ENCODE measurements at regions of chr6 and their contacts with region 1.

Region 1: GRCh38 chr6:129598244-129599187 is 111.5 kb downstream of the ARHGAP18 start:
- DNase-seq: peak in 4 of 35 experiments; percentile 8 to 83 (median 34)
- ATAC-seq: peak; percentile 73 to 80 (median 78)
- H3K4me3 ChIP-seq: no peak overlapping the region
- H3K4me3 Mint-ChIP-seq: no peak overlapping the region
- H3K27ac ChIP-seq: no peak overlapping the region
- H3K27ac Mint-ChIP-seq: no peak overlapping the region
- H3K4me1 ChIP-seq: no peaks in the 10 kb centered on the region
- H3K4me1 Mint-ChIP-seq: peaks cover 0 to 2% (median 0%) of the 10 kb centered on the region in 3 donors
- H3K27me3 ChIP-seq: no peaks in the 10 kb centered on the region
- H3K27me3 Mint-ChIP-seq: no peaks in the 10 kb centered on the region

Region 2: DNA sequence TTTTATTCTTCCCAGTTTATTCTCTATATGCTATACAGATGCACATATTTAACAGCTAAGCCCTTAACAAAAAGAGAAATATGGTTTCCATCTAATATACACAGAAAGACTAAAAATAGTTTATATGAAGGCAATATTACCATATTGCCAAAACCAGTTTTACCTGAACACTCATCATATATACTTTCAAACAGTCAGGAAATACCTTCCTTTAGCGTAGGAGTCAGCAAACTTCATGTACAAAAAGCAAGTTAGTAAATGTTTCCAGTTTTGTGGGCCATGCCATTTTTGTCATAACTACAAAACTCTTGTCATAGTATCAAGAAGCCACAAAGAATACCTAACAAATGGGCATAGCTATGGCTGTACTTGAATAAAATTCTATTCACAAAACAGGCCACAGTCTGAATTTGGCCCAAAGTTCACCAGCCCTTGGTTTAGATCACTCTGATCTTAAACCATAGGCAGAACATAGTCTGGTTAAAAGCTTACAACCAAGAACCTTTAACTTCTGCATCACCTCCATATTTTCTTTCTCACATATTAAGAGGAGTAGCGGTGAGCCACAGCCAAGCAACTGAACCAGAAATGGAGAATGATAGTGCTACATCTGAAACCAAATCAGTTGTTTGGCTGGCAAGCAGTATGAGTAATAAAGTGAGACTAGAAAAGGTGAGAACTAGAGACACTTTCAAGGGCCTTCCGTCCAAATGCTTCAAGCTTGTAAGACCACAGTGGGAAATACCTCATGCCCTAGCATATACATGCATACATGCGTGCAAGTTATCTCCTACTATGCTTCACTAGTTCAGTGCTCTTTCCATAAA is 1194.7 kb before region 1 on chr6:
- CTCF ChIA-PET with region 1: no interaction called
- POLR2A ChIA-PET with region 1: no interaction called
- DNase-seq: no peak
- ATAC-seq: no peak
- H3K4me3 ChIP-seq: no peak overlapping the region
- H3K4me3 Mint-ChIP-seq: no peak overlapping the region
- H3K27ac ChIP-seq: no peak overlapping the region
- H3K27ac Mint-ChIP-seq: no peak overlapping the region
- H3K4me1 ChIP-seq: no peaks in the 10 kb centered on the region
- H3K4me1 Mint-ChIP-seq: peaks cover 0 to 2% (median 0%) of the 10 kb centered on the region in 3 donors
- H3K27me3 ChIP-seq: no peaks in the 10 kb centered on the region
- H3K27me3 Mint-ChIP-seq: no peaks in the 10 kb centered on the region

Region 3: GRCh38 chr6:129162605-129163004 is 435.9 kb before region 1 on chr6:
- CTCF ChIA-PET with region 1: no interaction called
- POLR2A ChIA-PET with region 1: no interaction called
- DNase-seq: no peak
- ATAC-seq: no peak
- H3K4me3 ChIP-seq: no peak overlapping the region
- H3K4me3 Mint-ChIP-seq: no peak overlapping the region
- H3K27ac ChIP-seq: no peak overlapping the region
- H3K27ac Mint-ChIP-seq: no peak overlapping the region
- H3K4me1 ChIP-seq: no peaks in the 10 kb centered on the region
- H3K4me1 Mint-ChIP-seq: no peaks in the 10 kb centered on the region
- H3K27me3 ChIP-seq: no peaks in the 10 kb centered on the region
- H3K27me3 Mint-ChIP-seq: no peaks in the 10 kb centered on the region

Region 4: GRCh38 chr6:129280749-129281148 is 317.8 kb before region 1 on chr6:
- CTCF ChIA-PET with region 1: no interaction called
- POLR2A ChIA-PET with region 1: no interaction called
- DNase-seq: peak in 34 of 35 experiments; percentile 6 to 73 (median 40)
- ATAC-seq: peak; percentile 81 to 98 (median 92)
- H3K4me3 ChIP-seq: peak overlapping the region in 1 of 2 donors; percentile 4
- H3K4me3 Mint-ChIP-seq: peak overlapping the region; percentile 2 to 54 (median 2)
- H3K27ac ChIP-seq: peak overlapping the region; percentile 76
- H3K27ac Mint-ChIP-seq: peak overlapping the region; percentile 30 to 84
- H3K4me1 ChIP-seq: peaks cover 3 to 12% of the 10 kb centered on the region in 2 experiments
- H3K4me1 Mint-ChIP-seq: peaks cover 8 to 49% (median 35%) of the 10 kb centered on the region in 3 donors
- H3K27me3 ChIP-seq: no peaks in the 10 kb centered on the region
- H3K27me3 Mint-ChIP-seq: peaks cover 0 to 7% of the 10 kb centered on the region in 2 donors

Region 5: GRCh38 chr6:129469070-129469662 is 129.3 kb before region 1 on chr6:
- CTCF ChIA-PET with region 1: interaction called in 1 of 2 experiments, 31 read pairs
- POLR2A ChIA-PET with region 1: no interaction called
- DNase-seq: no peak
- ATAC-seq: no peak
- H3K4me3 ChIP-seq: no peak overlapping the region
- H3K4me3 Mint-ChIP-seq: no peak overlapping the region
- H3K27ac ChIP-seq: no peak overlapping the region
- H3K27ac Mint-ChIP-seq: no peak overlapping the region
- H3K4me1 ChIP-seq: no peaks in the 10 kb centered on the region
- H3K4me1 Mint-ChIP-seq: no peaks in the 10 kb centered on the region
- H3K27me3 ChIP-seq: no peaks in the 10 kb centered on the region
- H3K27me3 Mint-ChIP-seq: peaks cover 0 to 4% of the 10 kb centered on the region in 2 donors

Region 6: DNA sequence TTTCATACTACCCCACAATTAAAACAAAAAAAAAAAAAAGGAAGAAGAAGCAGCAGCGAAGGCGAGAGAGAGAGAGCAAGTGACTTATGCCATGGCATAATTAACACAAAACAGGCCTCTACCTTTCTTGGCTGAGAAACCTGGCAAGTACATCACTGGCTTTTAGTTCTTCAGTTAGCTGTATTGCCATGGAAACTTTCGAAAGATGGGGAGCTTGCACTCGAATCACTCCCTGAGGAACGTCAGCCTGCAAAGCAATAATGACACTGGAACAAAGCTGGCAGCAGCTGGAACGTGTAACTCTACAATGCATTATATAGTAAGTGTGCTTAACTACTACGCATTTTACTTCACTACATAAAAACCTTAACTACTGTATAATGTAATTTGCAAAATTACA is 14.7 kb before region 1 on chr6:
- CTCF ChIA-PET with region 1: no interaction called
- POLR2A ChIA-PET with region 1: no interaction called
- DNase-seq: no peak
- ATAC-seq: no peak
- H3K4me3 ChIP-seq: no peak overlapping the region
- H3K4me3 Mint-ChIP-seq: no peak overlapping the region
- H3K27ac ChIP-seq: no peak overlapping the region
- H3K27ac Mint-ChIP-seq: no peak overlapping the region
- H3K4me1 ChIP-seq: no peaks in the 10 kb centered on the region
- H3K4me1 Mint-ChIP-seq: no peaks in the 10 kb centered on the region
- H3K27me3 ChIP-seq: no peaks in the 10 kb centered on the region
- H3K27me3 Mint-ChIP-seq: no peaks in the 10 kb centered on the region

Region 7: DNA sequence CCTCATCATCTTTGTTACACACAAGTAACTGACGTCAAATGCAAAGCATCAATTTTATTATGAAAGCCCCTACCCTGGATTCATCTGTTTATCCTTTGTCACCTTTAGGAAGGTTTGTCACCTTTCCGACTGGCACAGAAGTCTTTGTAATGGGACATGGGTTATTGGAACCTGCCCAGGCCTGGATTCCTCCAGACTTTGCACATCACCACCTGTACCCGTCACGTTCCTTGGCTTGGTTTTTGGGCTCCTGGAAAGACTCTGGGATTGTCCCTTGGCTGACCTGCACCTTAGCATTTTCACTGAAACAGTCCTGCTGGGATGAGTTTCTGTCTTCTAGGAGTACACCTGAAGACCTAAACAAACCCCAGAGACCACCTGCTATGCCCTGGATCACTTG is 126.8 kb after region 1 on chr6:
- CTCF ChIA-PET with region 1: interaction called, 75 to 147 read pairs
- POLR2A ChIA-PET with region 1: interaction called in 1 of 2 experiments, 4 read pairs
- DNase-seq: no peak
- ATAC-seq: no peak
- H3K4me3 ChIP-seq: no peak overlapping the region
- H3K4me3 Mint-ChIP-seq: no peak overlapping the region
- H3K27ac ChIP-seq: no peak overlapping the region
- H3K27ac Mint-ChIP-seq: no peak overlapping the region
- H3K4me1 ChIP-seq: peaks cover 0 to 1% of the 10 kb centered on the region in 2 experiments
- H3K4me1 Mint-ChIP-seq: peaks cover 0 to 2% (median under 1%) of the 10 kb centered on the region in 3 donors
- H3K27me3 ChIP-seq: no peaks in the 10 kb centered on the region
- H3K27me3 Mint-ChIP-seq: no peaks in the 10 kb centered on the region

Region 8: DNA sequence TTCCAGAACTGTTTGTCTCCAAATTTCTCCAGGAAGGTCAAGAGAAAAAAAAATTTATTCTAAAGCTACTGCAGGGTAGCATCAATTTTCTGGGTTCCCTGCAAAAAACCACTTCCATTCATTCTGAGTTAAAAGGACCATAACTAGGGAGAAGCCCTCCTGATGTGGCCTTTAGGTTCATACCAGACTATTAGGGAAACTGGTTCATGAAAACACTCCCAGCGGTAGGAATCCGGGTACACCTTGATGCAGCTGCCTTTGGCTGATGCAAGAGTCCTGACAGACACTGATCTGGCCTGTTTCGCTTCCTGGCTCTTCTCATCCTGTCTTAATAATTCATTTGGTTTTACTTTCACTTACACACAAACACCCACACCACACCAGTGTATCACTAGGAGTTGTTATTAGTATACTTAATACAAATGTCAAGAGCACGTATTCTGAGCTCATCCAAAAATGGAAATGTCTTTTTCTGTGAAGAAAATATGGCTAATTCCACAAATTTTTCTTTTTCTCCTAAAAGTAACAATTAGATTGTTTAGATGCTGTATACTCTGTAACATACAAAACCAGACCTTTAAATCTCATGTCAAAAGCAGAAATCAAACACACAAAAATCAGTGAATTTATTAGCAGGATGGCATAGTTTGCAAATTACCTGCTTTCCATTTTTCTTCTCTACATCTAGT is 149.8 kb after region 1 on chr6:
- CTCF ChIA-PET with region 1: interaction called, 4 to 51 read pairs
- POLR2A ChIA-PET with region 1: interaction called, 3 to 4 read pairs
- DNase-seq: peak in 31 of 35 experiments; percentile 4 to 78 (median 28)
- ATAC-seq: peak; percentile 81 to 84 (median 82)
- H3K4me3 ChIP-seq: peak overlapping the region in 1 of 2 donors; percentile 21
- H3K4me3 Mint-ChIP-seq: peak overlapping the region; percentile 54 to 77 (median 72)
- H3K27ac ChIP-seq: peak overlapping the region; percentile 84
- H3K27ac Mint-ChIP-seq: peak overlapping the region; percentile 92 to 95
- H3K4me1 ChIP-seq: peaks cover 24 to 34% of the 10 kb centered on the region in 2 experiments
- H3K4me1 Mint-ChIP-seq: peaks cover 56 to 70% (median 59%) of the 10 kb centered on the region in 3 donors
- H3K27me3 ChIP-seq: no peaks in the 10 kb centered on the region
- H3K27me3 Mint-ChIP-seq: no peaks in the 10 kb centered on the region

Region 9: GRCh38 chr6:129936329-129937165 is 338.0 kb after region 1 on chr6:
- CTCF ChIA-PET with region 1: interaction called, 15 to 18 read pairs
- POLR2A ChIA-PET with region 1: no interaction called
- DNase-seq: peak in 27 of 35 experiments; percentile 5 to 70 (median 20)
- ATAC-seq: peak in 2 of 4 experiments; percentile 40 to 53
- H3K4me3 ChIP-seq: no peak overlapping the region
- H3K4me3 Mint-ChIP-seq: no peak overlapping the region
- H3K27ac ChIP-seq: no peak overlapping the region
- H3K27ac Mint-ChIP-seq: no peak overlapping the region
- H3K4me1 ChIP-seq: no peaks in the 10 kb centered on the region
- H3K4me1 Mint-ChIP-seq: peaks cover 0 to 4% (median 3%) of the 10 kb centered on the region in 3 donors
- H3K27me3 ChIP-seq: peaks cover 0 to 3% of the 10 kb centered on the region in 2 experiments
- H3K27me3 Mint-ChIP-seq: peaks cover 19 to 25% of the 10 kb centered on the region in 2 donors